HEK293 (cell line): ENCODE measurements at regions of chr13 and their contacts with region 1.

Region 1: GRCh38 chr13:73074036-73074435 is 15.2 kb downstream of the KLF5 start:
- H3K4me3 ChIP-seq: no peak overlapping the region
- H3K27ac ChIP-seq: no peak overlapping the region
- H3K4me1 ChIP-seq: no peaks in the 10 kb centered on the region
- CTCF ChIP-seq: no peak

Region 2: GRCh38 chr13:73058736-73059459 is 15.1 kb before region 1 on chr13 and contains the start of gene KLF5:
- CTCF ChIA-PET with region 1: no interaction called
- POLR2A ChIA-PET with region 1: interaction called, 17 read pairs
- H3K4me3 ChIP-seq: peak within 1 kb of the TSS; percentile 88
- H3K27ac ChIP-seq: peak within 1 kb of the TSS; percentile 65; the same call in 1 of the 2 replicates
- H3K4me1 ChIP-seq: no peaks in the 10 kb centered on the region
- CTCF ChIP-seq: peak; percentile 66